Activated B cell treated with CpG ODN at 0.5 μM for 24 hours (primary cell): ENCODE measurements at regions of chr10 and their contacts with region 1.

Region 1: GRCh38 chr10:14926722-14927416 is 27.0 kb downstream of the DCLRE1C start:
- DNase-seq: no peak
- ATAC-seq: peak; percentile 94
- H3K4me3 Mint-ChIP-seq: peak overlapping the region; percentile 46
- H3K27ac Mint-ChIP-seq: peak overlapping the region; percentile 91
- H3K4me1 Mint-ChIP-seq: peaks cover 32% of the 10 kb centered on the region
- H3K27me3 Mint-ChIP-seq: no peaks in the 10 kb centered on the region
- CTCF ChIP-seq: no peak

Region 2: DNA sequence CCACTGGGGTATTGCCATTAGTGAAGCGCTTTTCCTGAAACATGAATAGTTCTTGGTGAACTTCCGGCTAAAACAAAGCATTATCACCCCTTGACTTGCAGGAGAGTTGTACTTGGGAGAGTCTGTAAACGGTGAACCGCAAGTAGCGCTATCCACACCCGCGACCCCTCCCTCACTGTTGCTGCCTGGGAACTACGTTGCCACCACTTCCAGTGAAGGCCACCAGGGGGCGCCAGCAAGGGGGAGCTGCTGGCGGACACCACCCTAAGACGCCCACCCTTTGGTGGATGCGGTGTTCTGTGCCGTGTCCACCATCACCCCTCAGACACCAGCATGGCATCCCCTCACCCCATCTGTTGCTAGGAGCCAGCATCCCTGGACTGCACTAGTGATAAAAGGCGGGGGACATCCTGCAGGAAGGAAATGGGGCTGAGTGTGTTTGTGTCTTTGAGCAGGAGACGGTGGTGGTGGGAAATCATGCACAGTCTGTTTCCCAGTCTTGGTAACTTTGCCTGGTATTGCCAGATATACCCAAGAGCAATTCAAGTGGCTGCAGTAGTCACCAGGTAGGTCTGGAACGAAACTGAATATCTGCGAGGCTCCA is 894.4 kb before region 1 on chr10:
- CTCF ChIA-PET with region 1: no interaction called
- POLR2A ChIA-PET with region 1: interaction called, 11 read pairs
- intact Hi-C with region 1: no loop called
- DNase-seq: peak; percentile 23
- ATAC-seq: no peak
- H3K4me3 Mint-ChIP-seq: no peak overlapping the region
- H3K27ac Mint-ChIP-seq: no peak overlapping the region
- H3K4me1 Mint-ChIP-seq: peaks cover 5% of the 10 kb centered on the region
- H3K27me3 Mint-ChIP-seq: peaks cover 28% of the 10 kb centered on the region
- CTCF ChIP-seq: no peak

Region 3: DNA sequence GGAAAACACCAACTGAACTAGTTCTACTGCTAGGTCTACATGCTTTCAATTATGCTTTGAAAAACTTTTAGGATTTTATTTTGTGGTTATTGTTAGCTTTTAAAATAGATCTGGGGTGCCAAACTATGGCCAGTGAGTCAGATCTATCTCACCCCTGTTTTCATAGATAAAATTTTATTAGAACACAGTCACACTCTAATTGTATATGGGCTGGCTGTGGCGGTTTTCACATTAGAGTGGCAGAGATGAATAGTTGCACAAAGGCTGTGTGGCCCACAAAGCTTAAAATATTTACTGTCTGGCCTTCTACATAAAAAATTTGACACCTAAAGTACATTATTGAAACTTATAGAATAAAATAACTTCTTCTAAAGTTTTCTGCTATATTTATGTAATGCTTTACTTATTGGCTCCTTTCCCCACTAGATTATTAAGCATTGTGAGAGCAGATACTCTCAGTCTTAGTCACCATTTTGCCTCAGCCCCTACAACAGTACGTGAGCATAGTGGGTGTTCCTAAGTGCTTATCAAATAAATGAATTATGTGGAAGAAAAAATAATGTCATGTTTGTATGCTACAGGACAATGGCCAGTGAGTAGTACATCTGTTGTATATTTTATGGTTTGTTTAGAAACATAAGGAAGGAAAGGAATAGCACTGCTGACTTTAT is 53.6 kb before region 1 on chr10:
- CTCF ChIA-PET with region 1: no interaction called
- POLR2A ChIA-PET with region 1: interaction called, 13 read pairs
- intact Hi-C with region 1: loop called (anchors 2 kb)
- DNase-seq: no peak
- ATAC-seq: no peak
- H3K4me3 Mint-ChIP-seq: no peak overlapping the region
- H3K27ac Mint-ChIP-seq: no peak overlapping the region
- H3K4me1 Mint-ChIP-seq: peaks cover 15% of the 10 kb centered on the region
- H3K27me3 Mint-ChIP-seq: no peaks in the 10 kb centered on the region
- CTCF ChIP-seq: no peak

Region 4: DNA sequence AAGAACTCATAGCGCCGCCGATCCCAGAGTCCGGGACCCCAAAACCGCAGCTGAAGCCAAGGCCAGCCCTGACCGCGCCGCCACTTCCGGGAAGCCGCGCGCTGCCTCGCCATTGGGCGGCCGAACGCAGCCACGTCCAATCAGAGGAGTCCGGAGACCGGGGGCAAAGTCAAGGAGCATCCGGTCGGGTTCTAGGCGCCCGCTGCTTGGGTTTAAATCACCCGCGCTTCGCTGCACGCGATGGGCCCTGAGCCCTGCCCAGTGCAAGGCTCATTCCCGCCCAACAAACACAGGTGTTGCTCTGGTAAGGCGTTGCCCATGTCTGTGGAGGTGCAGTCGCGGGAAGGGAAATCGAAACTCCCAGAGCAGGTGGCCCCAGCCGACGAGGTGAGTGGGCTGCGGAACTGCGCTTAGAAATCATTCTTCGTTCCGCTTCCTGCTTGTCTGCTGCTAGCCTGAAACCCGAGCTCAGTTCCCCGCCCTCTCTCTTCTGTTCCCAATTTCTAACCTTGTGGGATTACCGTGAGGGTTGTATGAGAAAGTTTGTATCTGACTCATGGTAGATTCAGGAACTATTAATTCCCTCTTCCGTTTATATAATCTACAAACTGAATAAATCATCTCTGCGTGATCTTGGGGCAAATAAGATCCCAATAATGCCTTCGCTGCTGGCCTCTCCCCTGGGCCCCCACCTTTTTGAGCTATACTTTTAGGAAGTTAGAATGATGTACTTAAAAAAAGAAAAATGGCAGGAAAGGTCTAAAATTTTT is 27.3 kb after region 1 on chr10 and contains the start of gene DCLRE1C:
- CTCF ChIA-PET with region 1: no interaction called
- POLR2A ChIA-PET with region 1: interaction called, 30 read pairs
- intact Hi-C with region 1: loop called (anchors 1 kb)
- DNase-seq: peak; percentile 77
- ATAC-seq: peak; percentile 78
- H3K4me3 Mint-ChIP-seq: peak within 1 kb of the TSS; percentile 90
- H3K27ac Mint-ChIP-seq: peak within 1 kb of the TSS; percentile 96
- H3K4me1 Mint-ChIP-seq: peaks cover 56% of the 10 kb centered on the region
- H3K27me3 Mint-ChIP-seq: no peaks in the 10 kb centered on the region
- CTCF ChIP-seq: no peak
- total RNA-seq, gene DCLRE1C: 38.0 and 43.8 TPM in 2 replicates

Region 5: GRCh38 chr10:14959276-14960057 is 32.6 kb after region 1 on chr10 and contains the start of gene MEIG1:
- CTCF ChIA-PET with region 1: no interaction called
- POLR2A ChIA-PET with region 1: interaction called, 26 read pairs
- intact Hi-C with region 1: loop called (anchors 1 kb)
- DNase-seq: peak; percentile 100
- ATAC-seq: peak; percentile 83
- H3K4me3 Mint-ChIP-seq: peak within 1 kb of the TSS; percentile 97
- H3K27ac Mint-ChIP-seq: peak within 1 kb of the TSS; percentile 98
- H3K4me1 Mint-ChIP-seq: peaks cover 14% of the 10 kb centered on the region
- H3K27me3 Mint-ChIP-seq: no peaks in the 10 kb centered on the region
- CTCF ChIP-seq: no peak
- total RNA-seq, gene MEIG1: 0.49 and 0.54 TPM in 2 replicates

Region 6: GRCh38 chr10:15088428-15089261 is 161.8 kb after region 1 on chr10 and contains the start of gene ACBD7:
- CTCF ChIA-PET with region 1: no interaction called
- POLR2A ChIA-PET with region 1: no interaction called
- intact Hi-C with region 1: loop called (anchors 1 kb)
- DNase-seq: peak; percentile 79
- ATAC-seq: peak; percentile 100
- H3K4me3 Mint-ChIP-seq: peak within 1 kb of the TSS; percentile 77
- H3K27ac Mint-ChIP-seq: no peak within 1 kb of the TSS
- H3K4me1 Mint-ChIP-seq: no peaks in the 10 kb centered on the region
- H3K27me3 Mint-ChIP-seq: peaks cover 1% of the 10 kb centered on the region
- CTCF ChIP-seq: peak; percentile 22
- total RNA-seq, gene ACBD7: not detected in 2 replicates